ENCODE measurements at regions of chr10 and their contacts with region 1.

Region 1: DNA sequence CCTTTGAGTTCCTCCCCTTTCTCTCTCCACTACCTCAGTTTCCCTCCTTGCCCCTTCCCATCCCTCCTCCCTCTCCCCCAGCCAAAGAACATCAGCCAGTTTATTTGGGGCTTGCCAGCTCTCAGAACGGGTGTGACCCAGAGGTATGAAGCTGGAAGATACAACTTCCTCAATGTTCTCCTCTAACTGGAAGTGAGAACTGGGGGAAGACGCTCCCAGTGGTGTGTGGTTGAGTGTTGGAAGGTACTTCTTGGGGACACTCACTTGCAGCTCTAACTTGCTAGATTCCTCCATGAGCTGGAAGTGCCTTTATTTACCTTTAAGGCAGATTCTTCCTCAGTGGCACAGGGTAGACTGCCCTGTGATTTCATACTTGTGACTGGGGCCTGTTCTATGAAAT is 110.5 kb upstream of the HABP2 start:
- DNase-seq: no peak
- H3K4me3 ChIP-seq: no peak overlapping the region
- H3K27ac ChIP-seq: no peak overlapping the region
- H3K4me1 ChIP-seq: no peaks in the 10 kb centered on the region
- H3K27me3 ChIP-seq: no peaks in the 10 kb centered on the region
- CTCF ChIP-seq: no peak

Region 2: DNA sequence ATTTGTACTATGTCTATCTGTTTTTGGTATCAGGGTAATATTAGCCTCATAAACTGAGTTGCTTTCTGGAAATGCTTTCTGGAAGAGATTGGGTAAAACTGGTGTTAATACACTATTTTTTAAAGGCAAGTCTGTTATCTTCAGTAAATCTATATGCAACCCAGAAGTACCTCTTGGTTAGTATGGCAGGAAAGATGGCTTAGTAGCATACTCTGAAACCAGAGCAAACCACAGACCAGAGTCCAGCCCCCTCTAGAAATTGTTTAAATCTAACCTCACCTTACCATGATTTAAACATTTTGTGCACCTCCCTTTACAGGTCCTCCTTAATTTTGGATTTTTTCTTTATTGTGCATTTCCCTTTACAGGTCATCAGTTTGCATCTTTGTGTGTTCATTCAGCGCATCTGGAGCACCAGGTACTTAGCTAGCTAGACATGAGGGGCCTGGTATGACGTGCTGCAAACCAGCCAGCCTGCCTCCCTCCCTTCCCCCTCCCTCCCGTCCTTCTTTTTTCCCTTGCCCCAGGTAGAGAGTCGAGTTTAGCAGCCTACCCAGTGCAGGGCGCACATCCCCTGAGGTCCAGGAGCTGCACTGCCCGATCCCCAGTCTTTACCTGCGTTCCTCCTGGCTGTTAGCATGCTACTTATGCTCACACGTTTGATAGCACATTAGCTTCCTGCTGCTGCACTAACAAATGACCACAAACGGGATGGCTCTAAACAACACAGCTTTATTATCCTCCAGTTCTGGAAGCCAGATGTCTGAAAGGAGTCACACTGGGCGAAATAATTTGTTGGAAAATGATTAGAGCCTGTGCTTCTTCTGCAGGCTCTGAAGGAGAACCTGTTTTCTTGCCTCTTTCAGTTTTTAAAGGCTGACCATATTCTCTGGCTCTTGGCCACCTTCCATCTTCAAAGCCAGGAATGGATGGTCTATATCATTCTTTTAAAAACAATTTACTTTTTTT is 189.4 kb before region 1 on chr10:
- intact Hi-C with region 1: no loop called
- DNase-seq: no peak
- H3K4me3 ChIP-seq: no peak overlapping the region
- H3K27ac ChIP-seq: no peak overlapping the region
- H3K4me1 ChIP-seq: no peaks in the 10 kb centered on the region
- H3K27me3 ChIP-seq: no peaks in the 10 kb centered on the region
- CTCF ChIP-seq: no peak

Region 3: GRCh38 chr10:113480851-113481502 is 38.6 kb after region 1 on chr10:
- intact Hi-C with region 1: no loop called
- DNase-seq: no peak
- H3K4me3 ChIP-seq: no peak overlapping the region
- H3K27ac ChIP-seq: no peak overlapping the region
- H3K4me1 ChIP-seq: peaks cover 0 to 25% (median 18%) of the 10 kb centered on the region in 4 donors
- H3K27me3 ChIP-seq: no peaks in the 10 kb centered on the region
- CTCF ChIP-seq: no peak

Region 4: GRCh38 chr10:113521123-113521795 is 78.9 kb after region 1 on chr10:
- intact Hi-C with region 1: loop called (anchors 1 kb)
- DNase-seq: peak; percentile 78 to 82
- H3K4me3 ChIP-seq: no peak overlapping the region
- H3K27ac ChIP-seq: no peak overlapping the region
- H3K4me1 ChIP-seq: peaks cover 0 to 25% (median 15%) of the 10 kb centered on the region in 4 donors
- H3K27me3 ChIP-seq: no peaks in the 10 kb centered on the region
- CTCF ChIP-seq: peak; percentile 99 to 100